PC-9 (cell line): ENCODE measurements at regions of chr6 and their contacts with region 1.

Region 1: DNA sequence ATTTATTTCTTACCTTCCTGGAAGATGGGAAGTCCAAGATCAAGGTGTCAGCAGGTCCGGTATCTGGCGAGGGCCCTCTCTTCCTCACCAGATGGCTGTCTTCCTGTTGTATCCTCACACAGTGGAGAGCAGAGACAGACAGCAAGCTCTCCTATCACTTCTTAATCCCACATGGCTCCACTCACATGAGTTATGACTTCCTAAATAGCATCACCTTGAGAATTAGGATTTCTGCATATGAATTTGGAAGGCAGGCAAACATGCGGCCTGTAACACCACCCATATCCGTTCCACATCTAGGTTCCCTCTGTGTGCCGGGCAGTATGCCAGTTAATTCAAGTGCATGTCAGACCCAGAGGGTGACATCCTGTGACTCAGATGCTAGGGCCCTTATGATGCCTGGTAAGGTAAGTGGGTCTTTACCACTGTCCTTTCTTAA is 2.1 kb downstream of the RAET1E start:
- DNase-seq: peak; percentile 59 to 77
- H3K4me3 ChIP-seq: peak overlapping the region; percentile 36; the same call in 1 of the 2 replicates
- H3K27ac ChIP-seq: peak overlapping the region; percentile 75
- H3K4me1 ChIP-seq: peaks cover 45% of the 10 kb centered on the region
- H3K27me3 ChIP-seq: no peaks in the 10 kb centered on the region
- CTCF ChIP-seq: no peak

Region 2: GRCh38 chr6:149846321-149846720 is 49.5 kb before region 1 on chr6:
- CTCF ChIA-PET with region 1: no interaction called
- POLR2A ChIA-PET with region 1: no interaction called
- intact Hi-C with region 1: loop called (anchors 2 kb)
- DNase-seq: peak; percentile 57 to 79
- H3K4me3 ChIP-seq: no peak overlapping the region
- H3K27ac ChIP-seq: no peak overlapping the region
- H3K4me1 ChIP-seq: peaks cover 84% of the 10 kb centered on the region
- H3K27me3 ChIP-seq: no peaks in the 10 kb centered on the region
- CTCF ChIP-seq: no peak